Activated CD8-positive, alpha-beta T cell treated with anti-CD3 and anti-CD28 coated beads, Interleukin-2, amount 10 ng/mL, durations not matched to agents 7 days and 5 days (primary cell): ENCODE measurements at regions of chr4 and their contacts with region 1.

Region 1: GRCh38 chr4:109433205-109434006 is at the start of gene SEC24B:
- DNase-seq: peak; percentile 93
- ATAC-seq: peak; percentile 92
- H3K4me3 Mint-ChIP-seq: peak within 1 kb of the TSS; percentile 89
- H3K27ac Mint-ChIP-seq: peak within 1 kb of the TSS; percentile 88
- H3K4me1 Mint-ChIP-seq: peaks cover 47% of the 10 kb centered on the region
- H3K27me3 Mint-ChIP-seq: no peaks in the 10 kb centered on the region
- total RNA-seq, gene SEC24B: 22.8 to 22.9 TPM

Region 2: GRCh38 chr4:109195646-109196045 is 237.8 kb before region 1 on chr4:
- CTCF ChIA-PET with region 1: no interaction called
- POLR2A ChIA-PET with region 1: no interaction called
- DNase-seq: no peak
- ATAC-seq: no peak
- H3K4me3 Mint-ChIP-seq: no peak overlapping the region
- H3K27ac Mint-ChIP-seq: no peak overlapping the region
- H3K4me1 Mint-ChIP-seq: no peaks in the 10 kb centered on the region
- H3K27me3 Mint-ChIP-seq: peaks cover 8% of the 10 kb centered on the region

Region 3: GRCh38 chr4:109350125-109350524 is 83.3 kb before region 1 on chr4:
- CTCF ChIA-PET with region 1: no interaction called
- POLR2A ChIA-PET with region 1: no interaction called
- DNase-seq: no peak
- ATAC-seq: no peak
- H3K4me3 Mint-ChIP-seq: no peak overlapping the region
- H3K27ac Mint-ChIP-seq: no peak overlapping the region
- H3K4me1 Mint-ChIP-seq: no peaks in the 10 kb centered on the region
- H3K27me3 Mint-ChIP-seq: peaks cover 33% of the 10 kb centered on the region

Region 4: DNA sequence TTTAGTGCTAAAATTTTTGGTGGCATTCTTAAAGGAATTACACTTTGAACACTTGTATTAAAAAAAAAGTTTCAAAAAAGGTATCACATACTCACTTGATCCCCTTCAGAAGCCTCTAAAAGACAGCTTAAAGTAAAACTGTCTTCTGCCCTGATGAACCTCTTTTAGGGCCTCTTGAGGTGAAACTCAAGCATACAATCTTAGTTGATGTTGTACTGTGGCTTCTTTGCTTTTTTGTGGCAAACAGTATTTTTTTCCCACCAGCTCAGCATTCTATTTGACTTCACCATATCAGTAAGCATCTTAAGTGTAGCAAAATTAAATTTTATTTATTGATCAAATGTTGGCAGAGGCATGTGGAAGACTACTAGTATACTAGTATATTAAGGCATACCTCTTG is 13.9 kb after region 1 on chr4:
- CTCF ChIA-PET with region 1: interaction called, 16 read pairs
- POLR2A ChIA-PET with region 1: no interaction called
- DNase-seq: no peak
- ATAC-seq: no peak
- H3K4me3 Mint-ChIP-seq: no peak overlapping the region
- H3K27ac Mint-ChIP-seq: no peak overlapping the region
- H3K4me1 Mint-ChIP-seq: peaks cover 33% of the 10 kb centered on the region
- H3K27me3 Mint-ChIP-seq: no peaks in the 10 kb centered on the region

Region 5: GRCh38 chr4:109511414-109511813 is 78.0 kb after region 1 on chr4:
- CTCF ChIA-PET with region 1: no interaction called
- POLR2A ChIA-PET with region 1: no interaction called
- DNase-seq: no peak
- ATAC-seq: no peak
- H3K4me3 Mint-ChIP-seq: no peak overlapping the region
- H3K27ac Mint-ChIP-seq: no peak overlapping the region
- H3K4me1 Mint-ChIP-seq: no peaks in the 10 kb centered on the region
- H3K27me3 Mint-ChIP-seq: no peaks in the 10 kb centered on the region

Region 6: DNA sequence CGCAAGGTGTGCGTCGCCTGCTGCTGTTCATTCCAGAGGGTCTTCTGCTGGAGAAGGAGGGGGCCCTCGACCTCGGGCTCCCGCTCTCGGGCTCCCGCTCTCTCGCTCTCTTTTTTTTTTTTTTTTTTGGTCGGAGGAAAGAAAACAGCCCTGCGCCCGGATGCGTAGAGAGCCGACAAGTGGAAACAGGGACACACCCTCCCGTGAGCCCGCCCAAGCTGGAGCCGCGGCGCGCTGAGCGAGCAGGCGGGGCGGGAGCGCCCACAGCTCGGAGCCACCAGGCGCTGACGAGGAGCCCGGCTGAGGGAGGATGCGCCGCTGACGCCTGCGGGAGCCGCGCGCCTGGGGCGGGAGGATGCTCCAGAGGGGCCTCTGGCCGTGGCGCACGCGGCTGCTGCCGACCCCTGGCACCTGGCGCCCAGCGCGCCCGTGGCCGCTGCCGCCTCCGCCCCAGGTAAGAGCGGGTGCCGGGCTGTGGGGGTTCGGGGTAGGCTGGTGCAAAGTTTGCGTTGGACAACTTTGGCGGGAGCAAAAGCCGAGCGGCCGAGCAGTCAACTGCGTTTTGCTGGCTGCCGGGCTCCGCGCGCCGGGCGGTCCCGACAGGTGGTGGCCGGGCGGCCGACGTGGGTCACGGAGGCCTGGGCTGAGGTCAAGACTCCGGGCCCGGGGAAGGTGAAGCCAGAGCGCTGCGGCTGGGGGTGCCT is 126.7 kb after region 1 on chr4 and contains the start of gene MCUB:
- CTCF ChIA-PET with region 1: interaction called, 15 read pairs
- POLR2A ChIA-PET with region 1: interaction called, 16 read pairs
- DNase-seq: peak; percentile 95
- ATAC-seq: peak; percentile 95
- H3K4me3 Mint-ChIP-seq: peak within 1 kb of the TSS; percentile 92
- H3K27ac Mint-ChIP-seq: peak within 1 kb of the TSS; percentile 97
- H3K4me1 Mint-ChIP-seq: peaks cover 47% of the 10 kb centered on the region
- H3K27me3 Mint-ChIP-seq: no peaks in the 10 kb centered on the region
- total RNA-seq, gene MCUB: 104 to 109 TPM

Region 7: GRCh38 chr4:109702950-109703663 is 269.7 kb after region 1 on chr4 and contains the start of gene CASP6:
- CTCF ChIA-PET with region 1: interaction called, 23 read pairs
- POLR2A ChIA-PET with region 1: interaction called, 15 read pairs
- DNase-seq: peak; percentile 86
- ATAC-seq: peak; percentile 89
- H3K4me3 Mint-ChIP-seq: peak within 1 kb of the TSS; percentile 95
- H3K27ac Mint-ChIP-seq: peak within 1 kb of the TSS; percentile 91
- H3K4me1 Mint-ChIP-seq: peaks cover 32% of the 10 kb centered on the region
- H3K27me3 Mint-ChIP-seq: no peaks in the 10 kb centered on the region
- total RNA-seq, gene CASP6: 24.1 to 25.5 TPM

Region 8: GRCh38 chr4:109803924-109804571 is 370.6 kb after region 1 on chr4:
- CTCF ChIA-PET with region 1: interaction called, 14 read pairs
- POLR2A ChIA-PET with region 1: no interaction called
- DNase-seq: peak; percentile 33
- ATAC-seq: peak; percentile 58
- H3K4me3 Mint-ChIP-seq: no peak overlapping the region
- H3K27ac Mint-ChIP-seq: no peak overlapping the region
- H3K4me1 Mint-ChIP-seq: no peaks in the 10 kb centered on the region
- H3K27me3 Mint-ChIP-seq: peaks cover 6% of the 10 kb centered on the region

Region 9: DNA sequence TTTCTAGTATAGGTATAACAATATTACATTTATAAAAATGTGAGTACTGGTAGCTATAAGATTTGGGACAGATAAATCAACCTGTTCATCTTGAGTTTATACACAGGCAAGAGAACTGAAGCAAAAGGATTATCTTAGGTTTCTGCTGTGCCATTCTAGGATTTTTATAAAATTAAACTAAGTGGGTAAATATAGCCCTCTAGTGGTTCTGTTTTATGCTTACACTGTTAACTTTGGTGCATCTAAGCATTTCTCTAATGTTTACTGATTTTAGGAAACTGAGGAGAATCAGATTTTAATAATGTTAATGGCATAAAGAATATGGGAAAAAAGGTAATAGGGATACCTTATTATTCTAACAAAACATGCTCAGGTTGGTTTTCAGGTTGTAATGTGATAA is 393.3 kb after region 1 on chr4:
- CTCF ChIA-PET with region 1: interaction called, 20 read pairs
- POLR2A ChIA-PET with region 1: no interaction called
- DNase-seq: no peak
- ATAC-seq: no peak
- H3K4me3 Mint-ChIP-seq: no peak overlapping the region
- H3K27ac Mint-ChIP-seq: no peak overlapping the region
- H3K4me1 Mint-ChIP-seq: no peaks in the 10 kb centered on the region
- H3K27me3 Mint-ChIP-seq: no peaks in the 10 kb centered on the region

Region 10: DNA sequence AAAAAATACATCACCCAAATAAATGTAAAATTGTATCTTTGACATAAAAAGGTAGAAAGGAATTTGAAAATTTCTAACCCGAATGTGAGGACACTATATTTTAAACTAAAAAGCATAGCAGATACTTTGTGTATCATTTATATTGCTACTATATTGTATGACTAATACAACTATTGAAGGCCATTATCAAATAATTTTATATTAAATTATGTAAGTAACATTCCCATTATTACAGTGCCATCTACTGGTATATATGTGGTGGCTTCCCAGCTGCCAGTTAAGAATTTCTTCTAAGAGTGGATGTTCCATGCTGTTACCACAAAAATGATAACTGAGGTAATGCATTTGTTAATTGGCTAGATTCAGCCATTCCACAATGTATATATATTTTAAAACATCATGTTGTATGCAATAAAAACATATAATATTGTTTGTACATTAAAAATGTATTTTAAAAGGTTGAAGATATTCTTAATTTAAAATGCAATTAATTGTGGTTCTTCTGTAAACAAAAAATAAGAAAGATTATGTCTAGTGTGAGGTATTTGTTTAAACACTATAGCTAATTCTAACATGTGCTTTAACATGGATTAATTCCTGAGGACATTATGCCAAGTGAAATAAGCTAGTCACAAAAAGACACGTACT is 544.6 kb after region 1 on chr4:
- CTCF ChIA-PET with region 1: interaction called, 10 read pairs
- POLR2A ChIA-PET with region 1: no interaction called
- DNase-seq: no peak
- ATAC-seq: no peak
- H3K4me3 Mint-ChIP-seq: no peak overlapping the region
- H3K27ac Mint-ChIP-seq: no peak overlapping the region
- H3K4me1 Mint-ChIP-seq: peaks cover 5% of the 10 kb centered on the region
- H3K27me3 Mint-ChIP-seq: peaks cover 46% of the 10 kb centered on the region